A549 (cell line): ENCODE measurements at regions of chr3 and their contacts with region 1.

Region 1: DNA sequence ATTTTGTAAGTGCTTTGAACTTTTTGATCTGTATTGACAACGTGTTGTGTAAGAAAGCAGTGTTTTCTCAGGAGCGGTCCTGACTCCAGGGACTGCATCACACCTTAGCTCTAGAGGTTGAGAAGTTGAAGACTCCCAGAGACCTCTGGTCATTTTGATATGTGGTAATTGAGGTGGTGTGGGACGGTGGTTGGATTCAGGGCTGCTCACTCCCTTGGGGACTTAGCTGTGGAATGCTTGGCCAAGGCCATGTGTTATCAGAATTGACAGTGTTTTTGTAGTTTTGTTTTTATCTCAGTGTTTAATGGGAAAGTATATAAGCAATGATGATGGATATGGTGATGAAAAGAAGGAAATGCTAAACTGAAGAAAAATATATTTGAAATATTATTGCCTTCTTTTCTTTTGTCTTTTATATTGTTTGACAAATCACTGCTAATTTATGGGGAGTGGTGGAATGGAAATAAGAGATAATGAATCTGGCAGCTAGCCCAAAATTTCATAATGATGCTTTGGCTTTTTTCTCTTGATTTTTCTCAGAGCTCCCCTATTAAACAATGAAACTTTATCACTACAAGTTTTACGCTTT is 16.0 kb downstream of the CMSS1 start:
- DNase-seq: no peak
- ATAC-seq: no peak
- H3K4me3 ChIP-seq: no peak overlapping the region
- H3K27ac ChIP-seq: no peak overlapping the region
- H3K4me1 ChIP-seq: no peaks in the 10 kb centered on the region
- CTCF ChIP-seq: no peak
- EP300 ChIP-seq: no peak
- POLR2A ChIP-seq: no peak
- RAD21 ChIP-seq: no peak

Region 2: DNA sequence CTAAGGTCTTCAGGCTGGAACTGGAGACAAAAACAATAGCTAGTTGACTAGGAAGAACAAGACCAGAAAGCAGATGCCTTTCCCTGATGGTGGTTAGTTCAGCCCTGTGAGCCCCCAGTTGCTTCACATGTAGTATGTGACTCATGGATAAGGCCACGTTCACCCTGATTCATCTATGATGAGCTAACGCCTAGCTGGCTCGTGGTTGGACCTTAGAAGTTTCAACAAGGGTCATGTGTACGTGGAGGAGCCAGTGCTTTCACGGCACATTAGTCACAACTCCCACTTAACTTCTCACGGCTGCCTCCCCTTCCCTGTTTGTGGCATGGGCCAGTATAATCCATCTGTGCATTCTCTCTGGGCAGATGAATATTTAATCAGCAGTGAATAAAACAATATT is 174.7 kb before region 1 on chr3:
- CTCF ChIA-PET with region 1: no interaction called
- POLR2A ChIA-PET with region 1: no interaction called
- DNase-seq: peak in 1 of 2 experiments; percentile 31
- ATAC-seq: peak in 1 of 2 experiments; percentile 73; a peak in 3 of 6 replicates
- H3K4me3 ChIP-seq: no peak overlapping the region
- H3K27ac ChIP-seq: no peak overlapping the region
- H3K4me1 ChIP-seq: no peaks in the 10 kb centered on the region
- CTCF ChIP-seq: no peak
- EP300 ChIP-seq: no peak
- POLR2A ChIP-seq: no peak
- RAD21 ChIP-seq: no peak

Region 3: DNA sequence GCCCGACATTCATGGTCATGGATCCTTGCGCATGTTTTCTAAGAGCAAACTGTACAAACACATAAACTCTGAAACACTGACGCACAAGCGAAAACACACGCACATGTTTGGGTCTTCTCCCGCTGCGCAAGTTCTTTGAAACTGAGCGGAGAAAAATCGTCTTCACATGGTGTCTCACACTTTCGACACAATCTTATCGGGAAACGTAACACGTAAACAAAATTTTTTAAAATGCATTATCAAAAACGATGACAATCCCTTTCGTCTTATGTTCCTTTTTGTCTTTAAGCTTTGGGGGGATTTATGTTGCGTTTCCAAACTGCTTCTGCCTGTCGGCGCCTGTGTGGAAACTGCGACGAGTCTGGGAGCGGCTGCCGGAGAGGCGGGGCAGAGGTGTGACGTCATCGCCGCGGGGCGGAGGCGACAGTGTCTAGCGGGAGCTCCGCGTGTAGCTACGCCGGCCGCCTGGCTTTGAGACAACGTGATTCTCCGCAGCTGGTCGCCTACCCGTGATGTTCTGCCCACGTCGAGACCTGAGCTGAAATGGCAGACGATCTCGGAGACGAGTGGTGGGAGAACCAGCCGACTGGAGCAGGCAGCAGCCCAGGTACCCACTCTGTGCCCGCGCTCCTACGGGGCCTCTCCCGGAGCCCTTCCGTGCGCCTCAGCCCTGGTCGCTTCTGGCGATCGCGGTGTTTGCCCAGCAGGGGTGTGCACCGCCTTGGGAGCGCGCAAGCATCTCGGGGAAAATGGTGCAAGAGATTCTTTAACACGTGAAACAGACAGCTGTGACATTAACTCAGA is 16.1 kb before region 1 on chr3 and contains the start of gene CMSS1:
- CTCF ChIA-PET with region 1: interaction called, 30 read pairs
- POLR2A ChIA-PET with region 1: interaction called, 5 read pairs
- DNase-seq: peak; percentile 78 to 94
- ATAC-seq: peak; percentile 96 to 98
- H3K4me3 ChIP-seq: peak within 1 kb of the TSS; percentile 62
- H3K27ac ChIP-seq: peak within 1 kb of the TSS; percentile 78 to 88
- H3K4me1 ChIP-seq: peaks cover 6% of the 10 kb centered on the region; the same call in 2 of the 3 replicates
- CTCF ChIP-seq: no peak
- EP300 ChIP-seq: no peak
- POLR2A ChIP-seq: peak; percentile 83
- RAD21 ChIP-seq: no peak
- polyA plus RNA-seq, gene CMSS1: 48.1 and 62.9 TPM in 2 replicates

Region 4: DNA sequence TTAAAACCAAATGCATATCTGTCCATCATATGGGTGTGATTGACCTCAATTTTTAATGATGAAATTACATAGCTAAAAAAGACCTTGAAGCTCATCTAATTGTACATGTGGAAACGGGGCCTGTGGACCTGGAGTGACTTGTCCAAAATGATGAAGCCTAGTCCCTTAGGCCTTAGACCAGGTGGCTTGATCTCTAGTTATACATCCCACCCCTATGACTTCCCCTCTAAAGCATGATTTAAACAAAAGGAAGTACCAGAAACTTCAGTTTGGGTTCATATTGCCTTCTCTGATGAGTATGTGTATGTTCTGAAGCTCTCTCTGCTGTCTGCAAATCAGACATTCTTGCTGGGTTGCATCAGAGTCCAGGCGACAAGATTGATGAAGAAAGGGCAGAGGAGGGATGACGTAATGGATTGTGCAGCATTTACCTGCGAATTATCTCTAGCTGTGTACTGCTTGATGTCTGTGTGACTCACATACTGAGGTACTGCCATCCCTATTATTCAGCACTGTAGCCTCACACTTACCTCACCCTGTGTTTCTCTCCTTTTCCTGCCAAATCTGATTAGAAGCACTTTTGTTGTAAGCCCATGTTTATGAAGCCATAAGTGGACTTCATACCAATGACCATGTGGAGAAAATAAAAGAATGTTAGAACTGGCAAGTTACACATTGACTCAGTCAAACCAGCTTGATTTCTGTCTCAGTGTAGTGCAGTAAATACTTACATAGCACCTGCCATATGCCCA is 169.1 kb after region 1 on chr3:
- CTCF ChIA-PET with region 1: interaction called, 10 read pairs
- POLR2A ChIA-PET with region 1: no interaction called
- DNase-seq: peak; percentile 47 to 82
- ATAC-seq: peak; percentile 94 to 95
- H3K4me3 ChIP-seq: no peak overlapping the region
- H3K27ac ChIP-seq: peak overlapping the region; percentile 63 to 75
- H3K4me1 ChIP-seq: peaks cover 40% of the 10 kb centered on the region
- CTCF ChIP-seq: no peak
- EP300 ChIP-seq: peak; percentile 59 to 61; a peak in 4 of 5 replicates
- POLR2A ChIP-seq: no peak
- RAD21 ChIP-seq: 0 out of 5 replicates have a peak, but pooled peaks of 1 of the 2 experiments have one; percentile 36

Region 5: DNA sequence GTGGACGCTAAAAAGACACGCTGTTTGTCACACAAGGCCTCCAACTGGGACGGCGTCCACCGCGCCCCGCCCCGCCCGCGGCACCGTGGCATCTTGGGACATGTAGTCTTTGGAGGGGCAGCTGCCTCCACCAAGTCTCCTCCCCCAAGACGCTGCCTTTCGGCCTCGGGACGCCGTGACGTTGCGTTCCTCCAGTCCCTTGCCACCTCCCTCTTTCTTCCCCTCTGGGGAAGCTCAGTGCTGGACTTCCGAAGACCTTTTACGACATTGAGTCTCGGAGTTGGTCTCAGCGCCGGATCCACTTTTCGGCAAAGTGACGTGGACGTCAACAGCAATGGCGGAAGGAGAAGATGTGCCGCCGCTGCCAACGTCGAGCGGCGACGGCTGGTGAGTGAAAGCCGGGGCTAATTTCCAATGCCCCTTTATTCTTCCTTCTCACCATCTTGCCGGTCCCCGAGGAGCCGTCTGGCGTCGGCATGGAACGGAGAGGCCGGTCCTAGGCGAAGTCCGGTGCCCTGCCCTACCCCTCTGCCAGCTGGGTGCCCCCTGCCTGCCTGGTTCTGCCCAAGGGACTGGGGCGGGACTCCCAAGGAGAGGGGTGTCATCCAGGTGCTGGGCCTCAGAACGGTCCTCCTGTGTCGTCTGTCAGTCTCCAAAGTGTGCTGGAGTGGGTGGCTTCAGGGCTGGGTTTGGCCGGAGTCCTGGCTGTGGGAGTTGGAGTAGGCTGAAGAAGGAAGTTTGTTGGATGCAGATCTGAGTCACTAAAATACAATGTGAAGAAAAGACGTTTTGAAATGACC is 427.2 kb after region 1 on chr3 and contains the start of gene TBC1D23:
- CTCF ChIA-PET with region 1: interaction called, 118 read pairs
- POLR2A ChIA-PET with region 1: interaction called, 5 read pairs
- DNase-seq: peak; percentile 98 to 100
- ATAC-seq: peak; percentile 100
- H3K4me3 ChIP-seq: peak within 1 kb of the TSS; percentile 88
- H3K27ac ChIP-seq: peak within 1 kb of the TSS; percentile 91 to 94
- H3K4me1 ChIP-seq: peaks cover 10% of the 10 kb centered on the region; the same call in 2 of the 3 replicates
- CTCF ChIP-seq: no peak
- EP300 ChIP-seq: no peak
- POLR2A ChIP-seq: peak; percentile 59
- RAD21 ChIP-seq: no peak
- polyA plus RNA-seq, gene TBC1D23: 29.4 and 31.3 TPM in 2 replicates

Region 6: DNA sequence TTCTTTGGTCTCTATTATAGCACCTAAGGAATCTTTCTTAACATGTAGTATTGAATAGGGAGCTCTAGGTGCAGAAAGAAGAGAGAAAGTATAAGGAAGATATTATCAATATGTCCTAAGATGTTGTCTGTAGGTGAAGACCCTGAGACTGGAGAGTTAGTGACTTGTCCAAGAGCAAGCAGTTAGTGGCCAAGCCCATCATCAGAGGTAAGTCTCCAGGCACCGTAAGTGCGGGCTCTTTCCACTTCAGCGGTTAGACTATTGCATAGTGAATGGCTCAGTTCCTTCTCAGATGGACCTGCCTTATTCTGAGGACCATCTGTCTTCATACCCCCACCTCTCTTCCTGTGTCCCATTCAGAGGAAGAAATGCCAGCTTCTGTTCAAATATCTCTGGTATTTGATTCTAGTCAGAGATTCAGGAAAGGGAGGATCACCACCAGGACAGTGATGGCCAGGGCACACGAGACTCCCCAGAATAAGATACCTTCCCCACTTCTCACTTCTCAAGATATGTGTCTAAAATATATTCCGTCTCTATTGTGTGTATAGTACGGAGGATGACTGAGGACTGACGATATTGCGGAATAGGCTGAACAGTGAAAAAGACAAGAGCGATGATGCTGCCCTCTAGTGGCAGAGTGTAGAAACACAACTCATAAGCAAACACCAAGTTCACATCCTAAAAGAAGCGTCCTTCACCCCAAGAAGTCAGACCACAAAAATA is 756.6 kb after region 1 on chr3:
- CTCF ChIA-PET with region 1: interaction called, 11 read pairs
- POLR2A ChIA-PET with region 1: no interaction called
- DNase-seq: peak; percentile 49 to 73
- ATAC-seq: peak; percentile 86 to 92
- H3K4me3 ChIP-seq: peak overlapping the region; percentile 23; the same call in 1 of the 3 replicates
- H3K27ac ChIP-seq: peak overlapping the region in 1 of 2 experiments; percentile 53; a peak in 1 of 6 replicates
- H3K4me1 ChIP-seq: peaks cover 13% of the 10 kb centered on the region
- CTCF ChIP-seq: peak; percentile 93
- EP300 ChIP-seq: no peak
- POLR2A ChIP-seq: no peak
- RAD21 ChIP-seq: peak; percentile 84 to 85